Naive thymus-derived CD8-positive, alpha-beta T cell (primary cell): ENCODE measurements at regions of chr15 and their contacts with region 1.

Region 1: DNA sequence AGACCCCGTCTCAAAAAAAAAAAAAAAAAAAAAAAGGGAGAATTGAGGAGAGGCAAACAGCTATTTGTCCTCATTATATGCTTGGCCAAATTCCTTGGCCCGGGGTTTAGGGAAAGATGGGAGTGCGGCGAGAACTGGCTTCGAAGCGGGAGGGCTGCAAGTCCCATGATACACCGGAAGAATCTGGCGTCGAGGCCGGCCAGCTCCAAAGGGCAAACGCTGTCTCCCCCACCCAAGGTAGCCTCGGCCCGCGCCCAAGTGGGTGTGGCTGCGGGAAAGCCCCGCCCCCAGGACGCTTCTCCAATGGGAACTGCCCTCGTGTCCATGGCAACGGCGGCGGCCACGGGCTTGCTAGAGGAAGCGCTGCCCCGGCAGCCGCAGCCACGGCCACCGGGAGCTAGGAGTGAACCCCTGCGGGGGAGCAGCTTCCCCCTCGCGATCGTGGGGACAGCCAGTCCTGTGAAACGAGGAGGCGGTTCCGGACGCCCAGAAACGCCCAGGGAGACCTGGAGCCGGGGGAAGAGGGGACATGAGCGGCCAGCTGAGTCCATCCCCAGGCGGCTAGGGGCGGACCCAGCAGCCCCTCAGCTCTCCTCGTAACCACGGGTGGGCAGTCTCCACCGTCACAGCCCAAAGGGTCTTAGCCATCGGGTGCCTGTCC is at the start of gene TTLL13:
- DNase-seq: peak in 9 of 10 donors; percentile 37 to 85 (median 61)
- ATAC-seq: peak; percentile 84 to 86
- H3K4me3 Mint-ChIP-seq: peak within 1 kb of the TSS; percentile 67 to 83 (median 75)
- H3K27ac Mint-ChIP-seq: peak within 1 kb of the TSS; percentile 26 to 87 (median 79)
- H3K4me1 Mint-ChIP-seq: peaks cover 11 to 23% (median 19%) of the 10 kb centered on the region in 4 donors
- H3K27me3 Mint-ChIP-seq: no peaks in the 10 kb centered on the region
- polyA plus RNA-seq, gene TTLL13: not detected

Region 2: GRCh38 chr15:90265271-90266060 is 16.1 kb after region 1 on chr15 and contains the start of gene NGRN:
- POLR2A ChIA-PET with region 1: interaction called, 17 read pairs
- DNase-seq: peak; percentile 78 to 97 (median 92)
- ATAC-seq: peak; percentile 87 to 89
- H3K4me3 Mint-ChIP-seq: peak within 1 kb of the TSS; percentile 95 to 98 (median 97)
- H3K27ac Mint-ChIP-seq: peak within 1 kb of the TSS; percentile 96 to 99 (median 99)
- H3K4me1 Mint-ChIP-seq: peaks cover 25 to 56% (median 55%) of the 10 kb centered on the region in 4 donors
- H3K27me3 Mint-ChIP-seq: no peaks in the 10 kb centered on the region
- polyA plus RNA-seq, gene NGRN: 25.9 to 42.9 (median 26.5) TPM

Region 3: GRCh38 chr15:90436952-90437351 is 187.6 kb after region 1 on chr15:
- POLR2A ChIA-PET with region 1: no interaction called
- DNase-seq: peak in 1 of 10 donors; percentile 1
- ATAC-seq: peak in 1 of 2 donors; percentile 36
- H3K4me3 Mint-ChIP-seq: no peak overlapping the region
- H3K27ac Mint-ChIP-seq: peak overlapping the region in 4 of 10 donors; percentile 5 to 71 (median 23)
- H3K4me1 Mint-ChIP-seq: peaks cover 4 to 28% (median 18%) of the 10 kb centered on the region in 4 donors
- H3K27me3 Mint-ChIP-seq: no peaks in the 10 kb centered on the region